ENCODE measurements at regions of chr18 and their contacts with region 1.

Region 1: GRCh38 chr18:3454365-3455089 is 4.6 kb downstream of the TGIF1 start:
- DNase-seq: peak; percentile 19
- ATAC-seq: no peak; the same call in 2 of the 3 replicates
- H3K4me3 ChIP-seq: peak overlapping the region; percentile 28; the same call in 1 of the 2 replicates
- H3K27ac ChIP-seq: peak overlapping the region; percentile 19; the same call in 1 of the 2 replicates
- H3K4me1 ChIP-seq: peaks cover 22% of the 10 kb centered on the region
- H3K27me3 ChIP-seq: peaks cover 2 to 16% of the 10 kb centered on the region in 2 experiments
- CTCF ChIP-seq: peak; percentile 59 to 68 (median 59)
- EP300 ChIP-seq: no peak
- POLR2A ChIP-seq: no peak
- RAD21 ChIP-seq: peak; percentile 69

Region 2: DNA sequence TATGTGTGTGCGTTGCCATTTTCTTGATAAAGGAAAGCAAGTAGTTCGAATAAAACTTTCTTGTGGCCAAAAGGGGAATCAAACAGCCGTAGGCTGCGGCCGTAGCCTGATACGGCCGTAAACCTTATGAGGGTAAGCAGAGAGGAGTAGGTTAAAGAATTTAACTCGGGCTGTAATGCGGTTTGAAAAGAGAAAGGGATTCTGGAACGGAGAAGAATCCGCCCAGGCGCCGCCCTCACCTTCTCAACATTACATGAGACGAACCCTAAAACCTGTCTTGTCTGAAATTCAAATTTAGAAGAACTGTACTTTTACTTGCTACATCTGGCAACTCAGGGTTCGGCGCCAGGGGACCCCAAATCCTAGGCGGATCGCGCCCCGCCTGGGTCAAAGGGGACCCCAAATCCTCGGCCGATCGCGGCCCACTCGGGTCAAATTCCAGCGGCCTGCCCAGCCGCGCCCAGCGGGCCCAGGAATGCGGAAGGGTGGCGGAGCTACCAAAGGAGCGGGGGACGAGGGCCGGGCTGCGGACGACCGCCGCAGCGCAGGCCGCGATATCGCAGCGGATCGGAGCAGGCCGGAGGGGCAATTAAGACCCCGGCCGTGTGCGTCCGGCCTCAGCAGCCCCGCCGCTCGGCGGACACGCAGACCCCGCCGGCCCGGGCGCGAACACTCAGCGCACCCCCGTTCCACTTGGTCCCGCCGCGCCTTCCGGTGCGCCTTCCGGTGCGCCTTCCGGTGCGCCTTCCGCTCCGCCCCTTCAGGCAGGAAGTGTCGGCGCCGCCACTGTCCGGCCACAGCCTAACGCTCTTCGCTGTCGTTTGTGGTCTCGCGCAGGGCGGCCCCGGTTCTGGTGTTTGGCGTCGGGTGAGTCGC is 192.9 kb before region 1 on chr18 and contains the start of gene MYL12B:
- CTCF ChIA-PET with region 1: interaction called, 11 read pairs
- POLR2A ChIA-PET with region 1: no interaction called
- RAD21 ChIA-PET with region 1: interaction called, 5 read pairs
- SMC1A ChIA-PET with region 1: interaction called, 5 read pairs
- in situ Hi-C with region 1: no loop called
- intact Hi-C with region 1: no loop called
- DNase-seq: no peak
- ATAC-seq: peak; percentile 80
- H3K4me3 ChIP-seq: peak within 1 kb of the TSS; percentile 84
- H3K27ac ChIP-seq: peak within 1 kb of the TSS; percentile 91
- H3K4me1 ChIP-seq: peaks cover 14% of the 10 kb centered on the region
- H3K27me3 ChIP-seq: no peaks in the 10 kb centered on the region
- CTCF ChIP-seq: no peak
- EP300 ChIP-seq: no peak
- POLR2A ChIP-seq: peak; percentile 95
- RAD21 ChIP-seq: no peak
- polyA plus RNA-seq, gene MYL12B: 662 to 739 TPM

Region 3: DNA sequence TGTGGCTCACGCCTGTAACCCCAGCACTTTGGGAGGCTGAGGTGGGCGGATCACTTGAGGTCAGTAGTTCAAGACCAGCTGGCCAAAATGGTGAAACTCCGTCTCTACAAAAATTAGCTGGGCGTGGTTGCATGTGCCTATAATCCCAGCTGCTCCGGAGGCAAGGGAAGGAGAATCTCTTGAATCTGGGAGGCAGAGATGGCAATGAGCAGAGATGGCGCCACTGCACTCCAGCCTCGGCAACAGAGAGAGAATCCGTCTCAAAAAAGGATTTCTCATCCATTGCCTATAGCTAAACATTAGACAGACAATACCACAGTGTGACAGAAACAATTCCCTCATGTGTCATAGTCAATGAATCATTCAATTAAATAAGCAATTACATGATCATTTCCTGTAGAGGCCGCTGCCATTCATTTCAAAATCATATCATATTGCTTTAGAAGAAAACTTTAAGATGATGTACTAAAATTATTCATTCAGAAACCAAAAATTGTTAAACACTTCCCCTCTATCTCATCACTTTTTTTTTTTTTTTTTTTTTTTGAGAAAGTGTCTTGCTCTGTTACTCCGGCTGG is 74.1 kb before region 1 on chr18:
- CTCF ChIA-PET with region 1: interaction called, 12 read pairs
- POLR2A ChIA-PET with region 1: no interaction called
- RAD21 ChIA-PET with region 1: interaction called, 5 read pairs
- SMC1A ChIA-PET with region 1: interaction called, 12 read pairs
- in situ Hi-C with region 1: no loop called
- intact Hi-C with region 1: loop called (anchors 5 kb)
- DNase-seq: no peak
- ATAC-seq: peak; percentile 37
- H3K4me3 ChIP-seq: no peak overlapping the region
- H3K27ac ChIP-seq: no peak overlapping the region
- H3K4me1 ChIP-seq: peaks cover 15% of the 10 kb centered on the region
- H3K27me3 ChIP-seq: peaks cover 0 to 2% of the 10 kb centered on the region in 2 experiments; a peak in 1 of 4 replicates
- CTCF ChIP-seq: peak in 1 of 3 experiments; percentile 8; a peak in 1 of 6 replicates
- EP300 ChIP-seq: no peak
- POLR2A ChIP-seq: no peak
- RAD21 ChIP-seq: peak; percentile 38; the same call in 1 of the 2 replicates

Region 4: GRCh38 chr18:3472681-3473544 is 18.4 kb after region 1 on chr18:
- CTCF ChIA-PET with region 1: interaction called, 25 read pairs
- POLR2A ChIA-PET with region 1: interaction called, 4 read pairs
- RAD21 ChIA-PET with region 1: interaction called, 9 read pairs
- SMC1A ChIA-PET with region 1: interaction called, 16 read pairs
- in situ Hi-C with region 1: no loop called
- intact Hi-C with region 1: no loop called
- DNase-seq: no peak
- ATAC-seq: peak; percentile 96
- H3K4me3 ChIP-seq: no peak overlapping the region
- H3K27ac ChIP-seq: no peak overlapping the region
- H3K4me1 ChIP-seq: no peaks in the 10 kb centered on the region
- H3K27me3 ChIP-seq: no peaks in the 10 kb centered on the region
- CTCF ChIP-seq: no peak
- EP300 ChIP-seq: peak in 1 of 2 experiments; percentile 56; a peak in 1 of 4 replicates
- POLR2A ChIP-seq: no peak
- RAD21 ChIP-seq: no peak

Region 5: GRCh38 chr18:3541549-3542386 is 87.2 kb after region 1 on chr18:
- CTCF ChIA-PET with region 1: interaction called, 7 read pairs
- POLR2A ChIA-PET with region 1: interaction called, 3 read pairs
- RAD21 ChIA-PET with region 1: no interaction called
- SMC1A ChIA-PET with region 1: interaction called, 15 read pairs
- in situ Hi-C with region 1: no loop called
- intact Hi-C with region 1: no loop called
- DNase-seq: peak; percentile 27
- ATAC-seq: peak; percentile 95
- H3K4me3 ChIP-seq: no peak overlapping the region
- H3K27ac ChIP-seq: no peak overlapping the region
- H3K4me1 ChIP-seq: peaks cover 11% of the 10 kb centered on the region
- H3K27me3 ChIP-seq: no peaks in the 10 kb centered on the region
- CTCF ChIP-seq: no peak
- EP300 ChIP-seq: peak; percentile 65 to 81; a peak in 3 of 4 replicates
- POLR2A ChIP-seq: no peak
- RAD21 ChIP-seq: no peak

Region 6: GRCh38 chr18:3665780-3666525 is 211.4 kb after region 1 on chr18:
- CTCF ChIA-PET with region 1: interaction called, 51 read pairs
- POLR2A ChIA-PET with region 1: no interaction called
- RAD21 ChIA-PET with region 1: interaction called, 20 read pairs
- SMC1A ChIA-PET with region 1: interaction called, 38 read pairs
- in situ Hi-C with region 1: no loop called
- intact Hi-C with region 1: loop called (anchors 5 kb)
- DNase-seq: peak; percentile 30
- ATAC-seq: peak; percentile 81
- H3K4me3 ChIP-seq: no peak overlapping the region
- H3K27ac ChIP-seq: no peak overlapping the region
- H3K4me1 ChIP-seq: peaks cover 4% of the 10 kb centered on the region
- H3K27me3 ChIP-seq: no peaks in the 10 kb centered on the region
- CTCF ChIP-seq: peak; percentile 86 to 93 (median 92)
- EP300 ChIP-seq: no peak
- POLR2A ChIP-seq: no peak
- RAD21 ChIP-seq: peak; percentile 99

Measured in GM12878 (cell line).